Prostate gland (tissue), 2 donors: ENCODE measurements at regions of chr5 and their contacts with region 1.

Region 1: DNA sequence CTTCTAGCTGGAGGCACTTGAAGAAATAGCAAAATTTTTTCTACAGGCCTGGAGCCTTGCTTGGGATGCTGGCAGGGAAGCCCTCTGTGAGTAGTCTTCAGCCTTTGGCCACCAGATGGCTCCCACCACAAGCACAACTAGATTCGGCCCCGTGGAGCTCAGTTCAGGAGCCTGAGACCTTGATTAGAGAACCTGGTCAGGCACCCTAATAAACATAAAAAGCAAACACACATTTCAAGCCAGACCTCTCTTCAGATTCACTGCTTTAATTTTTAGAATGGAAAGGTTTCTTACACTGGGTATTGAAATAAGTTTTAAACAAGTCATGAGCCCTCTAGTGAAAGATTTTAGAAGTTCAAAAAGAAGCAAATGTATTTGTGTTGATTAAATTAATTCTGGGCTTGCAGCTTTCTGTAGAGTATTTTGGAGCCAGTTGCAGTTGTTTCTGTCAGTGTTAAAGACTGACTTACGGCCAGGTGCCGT is 41.4 kb downstream of the GLRX start:
- DNase-seq: peak; percentile 85
- H3K4me3 ChIP-seq: no peak overlapping the region
- H3K27ac ChIP-seq: peak overlapping the region; percentile 66 to 75
- H3K4me1 ChIP-seq: no peaks in the 10 kb centered on the region
- H3K27me3 ChIP-seq: no peaks in the 10 kb centered on the region
- CTCF ChIP-seq: peak; percentile 79 to 95 (median 86)
- POLR2A ChIP-seq: no peak

Region 2: DNA sequence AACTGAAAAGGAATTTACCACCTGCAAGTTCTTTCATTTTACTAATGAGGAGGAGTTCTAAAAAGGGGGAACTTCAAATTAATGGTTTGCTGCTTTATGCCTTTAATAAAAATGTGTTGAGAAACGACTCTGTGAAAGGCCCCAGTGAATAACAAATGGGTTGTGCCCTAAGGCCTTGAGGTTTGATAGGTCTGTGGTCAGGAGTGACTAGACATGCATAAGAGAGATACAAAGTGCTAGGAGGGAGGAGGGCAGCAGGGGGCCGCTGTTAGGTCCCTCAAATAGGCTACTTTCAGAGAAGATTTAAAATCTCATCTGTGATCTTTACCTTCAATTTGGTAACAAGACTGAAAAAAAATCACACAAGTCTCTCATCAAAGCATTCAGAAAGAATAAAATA is 331.7 kb before region 1 on chr5:
- intact Hi-C with region 1: no loop called
- DNase-seq: no peak
- H3K4me3 ChIP-seq: no peak overlapping the region
- H3K27ac ChIP-seq: no peak overlapping the region
- H3K4me1 ChIP-seq: no peaks in the 10 kb centered on the region
- H3K27me3 ChIP-seq: no peaks in the 10 kb centered on the region
- CTCF ChIP-seq: no peak
- POLR2A ChIP-seq: no peak

Region 3: GRCh38 chr5:95669540-95669939 is 111.6 kb before region 1 on chr5:
- intact Hi-C with region 1: loop called (anchors 5 kb)
- DNase-seq: peak; percentile 7
- H3K4me3 ChIP-seq: no peak overlapping the region
- H3K27ac ChIP-seq: peak overlapping the region; percentile 45 to 46
- H3K4me1 ChIP-seq: no peaks in the 10 kb centered on the region
- H3K27me3 ChIP-seq: no peaks in the 10 kb centered on the region
- CTCF ChIP-seq: no peak
- POLR2A ChIP-seq: no peak

Region 4: GRCh38 chr5:95730730-95731570 is 50.2 kb before region 1 on chr5 and contains the start of gene RHOBTB3:
- intact Hi-C with region 1: loop called (anchors 5 kb)
- DNase-seq: peak; percentile 88
- H3K4me3 ChIP-seq: peak within 1 kb of the TSS; percentile 86 to 91
- H3K27ac ChIP-seq: peak within 1 kb of the TSS; percentile 95 to 97
- H3K4me1 ChIP-seq: peaks cover 3% of the 10 kb centered on the region
- H3K27me3 ChIP-seq: no peaks in the 10 kb centered on the region
- CTCF ChIP-seq: peak in 1 of 4 experiments; percentile 14
- POLR2A ChIP-seq: peak; percentile 67
- total RNA-seq, gene RHOBTB3: 87.3 to 134 TPM

Region 5: GRCh38 chr5:95846554-95847260 is 65.6 kb after region 1 on chr5:
- intact Hi-C with region 1: loop called (anchors 2 kb)
- DNase-seq: peak; percentile 66
- H3K4me3 ChIP-seq: no peak overlapping the region
- H3K27ac ChIP-seq: peak overlapping the region; percentile 22 to 33
- H3K4me1 ChIP-seq: peaks cover 5% of the 10 kb centered on the region
- H3K27me3 ChIP-seq: no peaks in the 10 kb centered on the region
- CTCF ChIP-seq: peak; percentile 83 to 98 (median 94)
- POLR2A ChIP-seq: no peak

Region 6: GRCh38 chr5:95961617-95962474 is 180.7 kb after region 1 on chr5 and contains the start of gene ELL2:
- intact Hi-C with region 1: loop called (anchors 10 kb)
- DNase-seq: peak; percentile 99
- H3K4me3 ChIP-seq: peak within 1 kb of the TSS; percentile 96 to 100
- H3K27ac ChIP-seq: peak within 1 kb of the TSS; percentile 97 to 99
- H3K4me1 ChIP-seq: no peaks in the 10 kb centered on the region
- H3K27me3 ChIP-seq: no peaks in the 10 kb centered on the region
- CTCF ChIP-seq: no peak
- POLR2A ChIP-seq: peak; percentile 93
- total RNA-seq, gene ELL2: 80.0 to 104 TPM

Region 7: DNA sequence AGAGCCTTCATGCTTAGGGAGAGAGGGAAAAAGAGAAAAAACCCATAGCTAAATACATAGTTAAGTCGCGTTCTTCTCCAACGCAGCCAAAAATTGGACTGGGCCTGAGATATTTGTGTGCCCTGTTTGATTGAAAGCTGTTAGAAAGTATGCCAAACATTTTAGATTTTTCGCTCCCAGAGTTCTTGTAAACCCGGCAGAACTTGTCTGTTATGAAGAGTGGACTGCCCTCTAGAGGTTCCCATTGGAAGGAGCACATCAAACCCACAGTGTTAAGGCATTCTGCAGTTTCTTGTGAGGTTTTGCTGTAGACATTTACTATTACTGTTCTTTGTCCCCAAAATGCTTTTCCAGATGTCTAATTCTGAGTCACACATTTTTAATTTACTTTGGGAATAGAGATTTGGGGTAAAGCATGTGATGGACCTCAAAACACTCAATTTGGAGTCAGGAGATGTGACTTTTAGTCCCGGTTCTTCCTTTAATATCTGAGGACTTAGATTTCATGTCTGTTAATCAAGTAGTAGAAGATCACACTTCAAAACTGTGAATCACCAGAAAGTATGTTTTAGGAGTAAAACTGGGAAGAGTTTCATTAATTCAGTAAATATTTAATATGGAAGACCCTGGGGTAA is 555.3 kb after region 1 on chr5:
- intact Hi-C with region 1: loop called (anchors 10 kb)
- DNase-seq: peak; percentile 85
- H3K4me3 ChIP-seq: no peak overlapping the region
- H3K27ac ChIP-seq: peak overlapping the region; percentile 54 to 73
- H3K4me1 ChIP-seq: peaks cover 27% of the 10 kb centered on the region
- H3K27me3 ChIP-seq: no peaks in the 10 kb centered on the region
- CTCF ChIP-seq: peak; percentile 75 to 95 (median 90)
- POLR2A ChIP-seq: no peak